BJ (cell line): ENCODE measurements at regions of chr5 and their contacts with region 1.

Region 1: DNA sequence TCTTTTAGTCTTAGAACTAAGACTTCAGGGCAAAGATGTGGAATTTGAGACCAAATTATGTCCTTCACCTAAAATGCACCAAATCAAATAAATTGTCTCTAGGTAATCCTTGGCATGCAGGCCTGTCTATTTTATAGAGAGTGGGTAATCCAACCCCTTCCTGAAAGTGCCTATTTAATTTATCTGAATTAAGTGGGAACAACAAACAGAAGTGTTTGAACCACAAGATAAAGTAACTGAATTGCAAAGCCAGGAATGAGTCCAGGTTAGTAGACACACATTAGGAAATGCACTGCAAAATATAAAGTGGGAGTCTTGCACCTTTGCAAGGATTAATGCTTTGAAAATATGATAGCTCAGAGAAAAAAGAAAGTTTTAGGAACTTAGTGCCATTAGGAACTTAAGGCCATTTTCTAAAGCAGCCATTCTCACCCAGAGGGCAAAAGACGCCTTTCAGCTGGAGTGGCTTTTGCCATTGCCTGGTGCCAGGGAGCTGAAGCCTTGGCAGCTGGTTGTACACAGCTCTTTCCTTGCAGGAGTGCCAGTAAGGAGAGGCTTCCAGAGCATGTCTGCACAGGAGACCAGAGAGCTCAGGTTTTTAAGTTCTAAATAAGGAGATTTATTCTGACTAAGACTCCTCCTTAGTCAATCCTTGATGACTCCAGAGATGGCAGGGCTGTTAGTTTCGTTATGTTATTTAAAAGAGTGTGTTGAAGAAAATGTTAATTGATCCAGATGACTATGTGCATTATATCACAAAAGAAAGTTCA is 151.7 kb upstream of the ELL2 start:
- DNase-seq: no peak
- H3K4me3 ChIP-seq: no peak overlapping the region
- H3K27me3 ChIP-seq: no peaks in the 10 kb centered on the region
- CTCF ChIP-seq: no peak

Region 2: GRCh38 chr5:96096724-96097123 is 16.6 kb before region 1 on chr5:
- CTCF ChIA-PET with region 1: no interaction called
- POLR2A ChIA-PET with region 1: interaction called, 11 read pairs
- DNase-seq: no peak
- H3K4me3 ChIP-seq: no peak overlapping the region
- H3K27me3 ChIP-seq: no peaks in the 10 kb centered on the region
- CTCF ChIP-seq: no peak

Region 3: DNA sequence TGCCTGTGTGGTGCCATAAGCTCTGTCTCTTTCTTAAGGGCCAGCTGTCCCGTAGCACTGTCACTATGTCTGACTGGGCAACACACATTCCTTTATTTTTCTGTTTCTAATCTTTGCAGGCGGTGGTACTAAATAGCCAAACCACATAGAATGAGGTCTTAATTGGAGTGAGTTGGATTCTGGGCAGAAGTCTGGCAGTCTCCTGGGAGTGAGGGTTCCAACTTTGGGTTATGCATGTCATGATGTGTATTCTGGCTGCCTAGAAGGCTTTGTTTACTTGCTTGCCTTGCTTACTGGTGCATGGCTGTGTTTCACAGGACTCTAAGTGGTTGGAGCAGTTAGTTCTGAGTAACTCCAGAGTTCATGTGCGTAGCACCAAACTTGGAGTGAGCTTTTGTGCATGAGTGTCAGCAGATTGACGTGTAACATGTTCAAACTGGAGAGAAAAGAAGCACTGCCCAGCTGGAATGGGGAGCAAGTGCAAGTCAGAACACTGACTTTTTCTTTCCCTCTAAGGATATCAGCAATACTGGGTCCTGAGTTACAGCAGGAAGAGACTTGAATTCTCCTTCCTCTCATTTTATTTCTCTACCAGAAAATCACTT is 133.8 kb after region 1 on chr5:
- CTCF ChIA-PET with region 1: no interaction called
- POLR2A ChIA-PET with region 1: no interaction called
- DNase-seq: no peak
- H3K4me3 ChIP-seq: no peak overlapping the region
- H3K27me3 ChIP-seq: no peaks in the 10 kb centered on the region
- CTCF ChIP-seq: no peak

Region 4: DNA sequence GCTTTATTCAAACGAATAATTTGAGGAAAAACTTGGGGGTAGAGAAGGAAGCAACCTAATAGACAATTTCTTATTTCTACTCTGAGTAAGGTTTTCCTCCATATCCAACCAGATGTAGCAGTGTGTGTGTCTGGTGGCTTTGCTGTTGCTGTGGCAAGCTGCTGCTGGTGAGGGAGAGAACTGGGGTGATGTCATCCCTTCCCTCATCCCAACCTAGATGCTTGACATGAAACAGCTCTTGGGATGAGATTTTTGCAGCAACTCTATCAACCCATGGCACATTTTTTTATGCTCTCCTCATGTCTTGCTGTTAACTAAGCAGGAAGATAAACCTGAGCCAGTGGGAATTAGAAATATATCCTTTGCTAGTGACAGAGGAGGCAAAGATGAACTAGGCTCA is 183.9 kb after region 1 on chr5:
- CTCF ChIA-PET with region 1: no interaction called
- POLR2A ChIA-PET with region 1: no interaction called
- DNase-seq: peak; percentile 85
- H3K4me3 ChIP-seq: no peak overlapping the region
- H3K27me3 ChIP-seq: no peaks in the 10 kb centered on the region
- CTCF ChIP-seq: no peak